Heart left ventricle (tissue), 16 donors: ENCODE measurements at regions of chr1 and their contacts with region 1.

Region 1: DNA sequence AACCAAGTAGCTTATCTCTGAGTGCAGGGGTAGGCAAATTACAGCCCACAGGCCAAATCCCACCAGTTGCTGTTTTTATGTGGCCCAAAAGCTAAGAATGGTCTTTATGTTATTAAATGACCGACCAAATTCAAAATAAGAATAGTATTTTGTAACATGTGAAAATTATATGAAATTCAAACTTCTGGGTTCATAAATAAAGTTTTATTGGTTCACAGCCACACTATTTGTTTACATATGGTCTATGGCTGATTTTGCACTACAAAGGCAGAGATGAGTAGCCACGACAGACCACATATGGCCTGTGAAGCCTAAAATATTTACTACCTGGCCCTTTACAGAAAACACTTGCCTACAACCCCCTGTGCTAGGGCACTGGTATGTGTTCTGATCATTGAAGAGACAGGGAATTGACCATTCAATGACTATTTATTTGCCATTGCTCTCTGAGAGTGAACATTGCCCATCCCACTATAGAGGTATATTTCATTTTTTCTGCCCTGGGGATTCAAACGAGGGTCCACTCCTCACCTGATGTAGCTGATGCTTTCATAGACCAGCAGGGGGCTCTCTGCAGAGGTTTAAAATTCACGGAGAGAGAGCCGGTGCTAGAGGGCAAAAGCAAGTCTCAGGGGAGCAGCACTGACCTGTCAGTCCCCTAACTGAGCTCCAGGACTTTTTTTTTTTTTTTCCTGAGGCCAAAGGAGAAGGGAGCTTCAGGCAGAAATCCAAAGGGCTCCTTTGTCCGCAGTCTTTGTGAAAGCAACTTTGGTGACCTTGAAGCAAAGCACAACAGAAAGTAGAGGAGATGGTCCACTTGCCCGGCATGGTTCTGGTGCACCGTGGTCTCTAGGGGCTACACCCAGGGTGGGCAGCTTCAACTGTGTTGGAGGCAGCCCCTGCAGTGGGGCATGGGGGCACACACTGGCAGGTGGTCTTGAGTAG is 7.3 kb upstream of the GNL2 start:
- DNase-seq: no peak
- ATAC-seq: peak in 2 of 4 donors; percentile 42 to 49
- H3K4me3 ChIP-seq: no peak overlapping the region
- H3K27ac ChIP-seq: no peak overlapping the region
- H3K4me1 ChIP-seq: peaks cover 0 to 4% (median 0%) of the 10 kb centered on the region in 12 donors
- H3K27me3 ChIP-seq: peaks cover 0 to 27% (median 3%) of the 10 kb centered on the region in 9 donors
- CTCF ChIP-seq: peak; percentile 37 to 67 (median 58)
- POLR2A ChIP-seq: no peak

Region 2: DNA sequence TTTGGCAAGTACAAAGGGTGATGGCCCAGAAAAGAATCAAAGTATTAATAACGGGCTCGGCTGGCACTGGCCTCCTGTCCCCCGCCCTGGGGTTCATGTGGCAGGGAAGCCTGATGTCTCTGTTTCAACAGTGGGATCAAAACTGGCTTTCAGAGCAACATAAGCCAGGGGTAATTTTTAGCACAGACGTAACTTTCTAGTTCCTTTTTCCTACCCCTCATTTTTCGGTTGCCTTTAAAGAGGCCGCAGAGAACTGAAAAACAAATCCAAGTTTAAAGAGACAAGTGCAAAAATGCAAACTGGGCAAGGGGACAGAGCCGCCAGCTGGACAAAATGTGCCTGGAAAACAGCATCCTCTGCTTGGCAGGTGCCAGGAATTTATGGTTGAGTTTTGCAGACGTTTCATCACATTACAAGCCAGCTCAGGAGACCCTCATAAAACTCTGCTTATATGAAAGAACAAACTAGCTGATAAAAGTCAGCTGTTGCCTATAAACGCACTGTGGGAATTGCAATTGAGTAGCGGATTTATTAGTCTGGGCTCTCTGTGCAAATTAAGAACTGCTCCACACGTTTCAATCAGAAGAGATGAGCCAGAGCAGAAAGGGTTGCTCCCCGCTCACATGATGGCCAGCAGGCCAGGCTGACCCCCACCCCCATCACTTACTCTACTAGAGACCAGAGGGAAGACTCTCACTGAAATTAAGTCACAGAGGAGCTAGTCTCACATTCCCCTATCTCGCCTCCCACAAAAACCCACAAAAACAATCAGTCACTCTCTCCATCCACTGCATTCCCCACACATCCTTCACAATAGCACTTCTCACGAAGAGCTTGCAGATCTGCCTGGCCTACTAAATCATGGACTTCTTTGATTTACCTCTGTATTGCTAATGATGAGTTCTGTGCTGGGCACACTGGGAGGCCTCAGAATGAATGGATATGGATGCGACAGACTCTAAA is 73.5 kb after region 1 on chr1:
- intact Hi-C with region 1: loop called in 7 of 10 experiments (anchors 2 to 5 kb)
- DNase-seq: no peak
- ATAC-seq: peak in 1 of 4 donors; percentile 22
- H3K4me3 ChIP-seq: no peak overlapping the region
- H3K27ac ChIP-seq: peak overlapping the region in 6 of 12 donors; percentile 23 to 68 (median 29)
- H3K4me1 ChIP-seq: peaks cover 0 to 4% (median 0%) of the 10 kb centered on the region in 12 donors
- H3K27me3 ChIP-seq: peaks cover 0 to 15% (median 2%) of the 10 kb centered on the region in 9 donors
- CTCF ChIP-seq: no peak
- POLR2A ChIP-seq: no peak

Region 3: GRCh38 chr1:37946703-37947360 is 343.8 kb after region 1 on chr1 and contains the start of gene INPP5B:
- intact Hi-C with region 1: no loop called
- DNase-seq: peak; percentile 90 to 94 (median 92)
- ATAC-seq: peak; percentile 95 to 97 (median 96)
- H3K4me3 ChIP-seq: peak within 1 kb of the TSS; percentile 50 to 94 (median 81)
- H3K27ac ChIP-seq: peak within 1 kb of the TSS; percentile 13 to 95 (median 89)
- H3K4me1 ChIP-seq: peaks cover 0 to 30% (median 16%) of the 10 kb centered on the region in 12 donors
- H3K27me3 ChIP-seq: no peaks in the 10 kb centered on the region
- CTCF ChIP-seq: peak in 4 of 12 donors; percentile 9 to 36 (median 22)
- POLR2A ChIP-seq: peak in 1 of 2 donors; percentile 53
- total RNA-seq, gene INPP5B: 7.7 to 16.2 (median 13.1) TPM